Activated CD4-positive, alpha-beta T cell treated with anti-CD3 and anti-CD28 coated beads, Interleukin-2, amount 10 ng/mL, durations not matched to agents 24 days and 14 days (primary cell): ENCODE measurements at regions of chr1 and their contacts with region 1.

Region 1: DNA sequence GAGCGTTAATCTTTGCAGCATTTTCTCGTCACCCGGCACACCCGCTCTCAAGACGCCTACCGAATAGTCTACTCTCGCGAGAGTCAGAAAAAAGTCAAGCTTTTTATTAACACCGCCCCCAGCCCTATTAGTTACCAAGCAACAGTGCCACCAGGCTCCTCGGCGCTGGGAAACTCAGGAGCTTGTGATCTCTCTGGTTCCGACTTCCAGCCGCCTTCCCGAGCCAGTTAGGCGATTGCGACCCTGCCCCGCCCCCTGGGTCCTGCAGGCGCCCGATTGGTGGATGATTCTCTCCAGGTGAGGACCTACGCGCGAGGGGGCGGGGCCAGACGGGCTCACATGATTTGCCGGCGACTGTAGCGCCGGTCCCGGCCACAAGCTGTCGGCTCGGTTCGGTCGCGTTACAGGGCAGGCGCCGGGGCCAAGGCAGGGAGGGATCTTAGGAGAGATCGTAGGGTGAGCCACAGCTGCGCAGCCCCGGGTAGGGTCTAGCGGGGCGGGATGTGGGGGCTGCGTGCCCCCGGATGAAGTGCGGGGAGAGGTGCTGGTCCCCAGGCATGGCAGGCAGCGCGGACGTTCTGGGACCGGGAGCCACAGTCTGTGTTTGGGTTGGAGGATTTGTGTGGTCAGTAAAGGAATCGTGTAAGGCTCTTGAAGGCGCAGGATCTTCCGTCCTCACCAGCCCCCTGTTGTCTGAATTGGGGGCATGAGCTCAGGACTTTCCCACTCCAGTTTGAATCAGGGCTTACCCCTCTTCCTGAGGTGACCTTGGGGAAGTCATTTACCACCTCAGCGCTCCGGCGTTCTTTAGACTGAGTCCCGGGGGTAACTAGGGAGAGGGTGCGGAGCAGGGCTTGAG is at the start of gene PFKFB2:
- DNase-seq: peak; percentile 98
- H3K4me3 Mint-ChIP-seq: peak within 1 kb of the TSS; percentile 100
- H3K27ac Mint-ChIP-seq: peak within 1 kb of the TSS; percentile 83
- H3K4me1 Mint-ChIP-seq: peaks cover 36% of the 10 kb centered on the region
- H3K27me3 Mint-ChIP-seq: peaks cover 7% of the 10 kb centered on the region
- total RNA-seq, gene PFKFB2: 2.6 and 3.5 TPM in 2 replicates

Region 2: GRCh38 chr1:206925106-206925736 is 127.9 kb before region 1 on chr1:
- intact Hi-C with region 1: loop called (anchors 5 kb)
- DNase-seq: peak; percentile 85
- H3K4me3 Mint-ChIP-seq: no peak overlapping the region
- H3K27ac Mint-ChIP-seq: no peak overlapping the region
- H3K4me1 Mint-ChIP-seq: peaks cover 24% of the 10 kb centered on the region
- H3K27me3 Mint-ChIP-seq: no peaks in the 10 kb centered on the region

Region 3: GRCh38 chr1:207077470-207078377 is 24.6 kb after region 1 on chr1:
- intact Hi-C with region 1: loop called (anchors 1 kb)
- DNase-seq: peak; percentile 92
- H3K4me3 Mint-ChIP-seq: no peak overlapping the region
- H3K27ac Mint-ChIP-seq: no peak overlapping the region
- H3K4me1 Mint-ChIP-seq: no peaks in the 10 kb centered on the region
- H3K27me3 Mint-ChIP-seq: peaks cover 35% of the 10 kb centered on the region

Region 4: GRCh38 chr1:207321079-207321789 is 268.1 kb after region 1 on chr1 and contains the start of gene CD55:
- intact Hi-C with region 1: loop called (anchors 1 kb)
- DNase-seq: peak; percentile 100
- H3K4me3 Mint-ChIP-seq: peak within 1 kb of the TSS; percentile 98
- H3K27ac Mint-ChIP-seq: peak within 1 kb of the TSS; percentile 100
- H3K4me1 Mint-ChIP-seq: peaks cover 35% of the 10 kb centered on the region
- H3K27me3 Mint-ChIP-seq: peaks cover 3% of the 10 kb centered on the region
- total RNA-seq, gene CD55: 133 and 142 TPM in 2 replicates

Region 5: DNA sequence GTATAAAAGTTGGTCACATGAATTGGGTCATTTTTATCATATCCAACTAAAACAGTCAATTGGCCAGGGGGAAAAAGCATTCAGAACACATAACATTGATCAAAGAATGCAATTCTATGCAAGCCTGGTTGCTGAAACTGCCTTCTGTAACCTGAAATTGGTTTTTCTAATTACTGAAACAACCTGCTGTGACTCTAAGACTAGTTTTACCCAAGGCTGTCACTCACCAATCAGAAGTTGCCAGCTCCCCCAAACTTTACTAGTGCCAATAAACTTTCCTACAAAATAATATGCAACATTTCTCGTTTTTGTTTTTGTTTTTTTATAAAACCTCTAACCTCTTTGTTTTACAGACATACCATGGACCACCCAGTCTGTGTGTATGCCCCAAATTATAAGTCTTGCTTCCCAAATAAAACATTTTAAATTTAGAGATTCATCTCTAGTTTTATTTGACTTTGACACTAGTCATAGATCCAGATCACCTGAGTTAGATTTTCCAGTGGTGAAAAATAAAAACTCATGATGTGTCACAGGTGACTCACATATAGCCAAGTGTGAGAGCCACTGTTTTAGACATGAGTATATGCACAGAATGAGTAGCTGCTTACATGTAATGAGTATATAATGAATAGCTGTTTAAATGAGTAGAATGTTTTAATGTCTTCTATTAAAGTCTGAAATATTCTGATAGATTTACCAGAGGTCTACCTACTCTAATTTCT is 336.8 kb after region 1 on chr1:
- intact Hi-C with region 1: loop called (anchors 1 kb)
- DNase-seq: no peak
- H3K4me3 Mint-ChIP-seq: no peak overlapping the region
- H3K27ac Mint-ChIP-seq: peak overlapping the region; percentile 82
- H3K4me1 Mint-ChIP-seq: peaks cover 8% of the 10 kb centered on the region
- H3K27me3 Mint-ChIP-seq: no peaks in the 10 kb centered on the region

Region 6: DNA sequence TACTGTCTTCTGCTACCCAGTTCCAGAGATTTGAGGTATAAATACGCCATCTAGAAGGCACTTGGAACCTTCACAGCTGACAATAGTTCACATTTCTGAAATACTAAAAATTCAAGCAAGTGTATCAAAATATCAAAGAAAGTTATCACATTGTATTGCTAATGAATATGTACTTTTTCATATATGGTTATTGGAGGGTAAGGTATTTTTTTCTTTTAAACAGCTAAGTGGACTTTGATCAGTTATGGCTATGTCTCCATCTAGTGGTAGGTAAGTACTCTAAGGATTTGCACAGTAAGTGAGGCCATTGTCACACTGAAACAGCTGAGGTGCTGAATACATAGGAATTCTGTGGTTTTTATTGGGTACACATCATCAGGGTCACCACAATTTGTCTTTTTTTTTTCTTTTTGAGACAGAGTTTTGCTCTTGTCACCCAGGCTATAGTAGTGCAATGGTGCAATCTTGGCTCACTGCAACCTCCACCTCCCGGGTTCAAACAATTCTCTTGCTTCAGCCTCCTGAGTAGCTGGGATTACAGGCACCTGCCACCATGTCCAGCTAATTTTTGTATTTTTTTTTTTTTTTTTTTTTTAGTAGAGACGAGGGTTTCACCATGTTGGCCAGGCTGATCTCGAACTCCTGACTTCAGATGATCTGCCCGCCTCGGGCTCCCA is 351.8 kb after region 1 on chr1:
- intact Hi-C with region 1: loop called (anchors 1 kb)
- DNase-seq: peak; percentile 69
- H3K4me3 Mint-ChIP-seq: no peak overlapping the region
- H3K27ac Mint-ChIP-seq: no peak overlapping the region
- H3K4me1 Mint-ChIP-seq: peaks cover 18% of the 10 kb centered on the region
- H3K27me3 Mint-ChIP-seq: no peaks in the 10 kb centered on the region

Region 7: GRCh38 chr1:207751790-207752455 is 698.8 kb after region 1 on chr1 and contains the start of gene CD46:
- intact Hi-C with region 1: loop called (anchors 5 kb)
- DNase-seq: peak; percentile 99
- H3K4me3 Mint-ChIP-seq: peak within 1 kb of the TSS; percentile 98
- H3K27ac Mint-ChIP-seq: peak within 1 kb of the TSS; percentile 98
- H3K4me1 Mint-ChIP-seq: peaks cover 59% of the 10 kb centered on the region
- H3K27me3 Mint-ChIP-seq: no peaks in the 10 kb centered on the region
- total RNA-seq, gene CD46: 96.3 and 107 TPM in 2 replicates